ENCODE measurements at regions of chr1 and their contacts with region 1.

Region 1: DNA sequence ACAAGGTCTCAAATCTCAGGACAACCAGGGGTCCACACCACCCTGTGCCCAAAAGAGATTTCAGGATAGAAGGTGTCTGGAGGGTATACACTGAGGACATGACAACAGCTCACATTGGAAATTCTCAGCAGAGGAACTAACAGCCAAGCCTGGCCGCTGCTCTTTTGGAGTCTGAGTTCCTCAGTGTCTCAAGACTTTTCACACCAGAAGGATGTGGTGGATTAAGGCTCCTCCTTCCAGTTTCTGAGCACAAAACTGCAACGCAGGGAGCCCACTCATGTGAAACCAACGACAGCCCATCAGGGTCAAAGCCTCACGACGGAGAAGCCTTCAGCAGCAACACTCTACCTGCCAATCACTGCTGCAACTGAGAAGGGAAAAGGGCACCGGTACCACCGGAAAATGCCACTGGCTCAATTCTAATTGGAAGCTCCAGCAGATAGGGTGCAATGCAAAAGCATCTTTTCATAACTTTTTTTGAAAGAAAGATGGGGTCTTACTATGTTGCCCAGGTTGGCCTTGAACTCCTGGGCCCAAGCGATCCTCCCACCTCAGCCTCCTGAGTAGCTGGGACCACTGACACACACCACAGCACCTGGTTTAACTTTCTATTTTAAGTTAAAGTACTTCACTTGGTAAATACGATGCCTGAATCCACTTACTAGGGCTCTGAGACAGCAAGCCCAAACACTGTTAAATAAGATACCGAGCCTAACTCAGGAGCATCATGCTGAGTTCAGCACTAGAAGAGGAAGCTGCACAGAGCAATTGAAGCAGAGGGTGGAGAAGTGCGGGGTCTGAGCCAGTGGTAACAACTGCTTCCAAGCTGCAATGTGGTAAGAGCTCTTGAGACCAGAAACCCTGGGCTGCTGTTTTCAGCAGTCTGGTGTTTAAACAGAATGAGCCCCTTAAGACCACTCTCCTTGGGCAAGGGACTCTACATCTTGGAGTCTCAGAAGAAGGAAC is 7.8 kb downstream of the CAPZB start:
- DNase-seq: peak; percentile 68
- H3K4me3 Mint-ChIP-seq: peak overlapping the region; percentile 59
- H3K27ac Mint-ChIP-seq: peak overlapping the region; percentile 93
- H3K4me1 Mint-ChIP-seq: peaks cover 96% of the 10 kb centered on the region
- H3K27me3 Mint-ChIP-seq: no peaks in the 10 kb centered on the region

Region 2: GRCh38 chr1:19232526-19232851 is 245.1 kb before region 1 on chr1:
- CTCF ChIA-PET with region 1: no interaction called
- POLR2A ChIA-PET with region 1: no interaction called
- intact Hi-C with region 1: no loop called
- DNase-seq: no peak
- H3K4me3 Mint-ChIP-seq: no peak overlapping the region
- H3K27ac Mint-ChIP-seq: no peak overlapping the region
- H3K4me1 Mint-ChIP-seq: peaks cover 1% of the 10 kb centered on the region
- H3K27me3 Mint-ChIP-seq: no peaks in the 10 kb centered on the region

Region 3: DNA sequence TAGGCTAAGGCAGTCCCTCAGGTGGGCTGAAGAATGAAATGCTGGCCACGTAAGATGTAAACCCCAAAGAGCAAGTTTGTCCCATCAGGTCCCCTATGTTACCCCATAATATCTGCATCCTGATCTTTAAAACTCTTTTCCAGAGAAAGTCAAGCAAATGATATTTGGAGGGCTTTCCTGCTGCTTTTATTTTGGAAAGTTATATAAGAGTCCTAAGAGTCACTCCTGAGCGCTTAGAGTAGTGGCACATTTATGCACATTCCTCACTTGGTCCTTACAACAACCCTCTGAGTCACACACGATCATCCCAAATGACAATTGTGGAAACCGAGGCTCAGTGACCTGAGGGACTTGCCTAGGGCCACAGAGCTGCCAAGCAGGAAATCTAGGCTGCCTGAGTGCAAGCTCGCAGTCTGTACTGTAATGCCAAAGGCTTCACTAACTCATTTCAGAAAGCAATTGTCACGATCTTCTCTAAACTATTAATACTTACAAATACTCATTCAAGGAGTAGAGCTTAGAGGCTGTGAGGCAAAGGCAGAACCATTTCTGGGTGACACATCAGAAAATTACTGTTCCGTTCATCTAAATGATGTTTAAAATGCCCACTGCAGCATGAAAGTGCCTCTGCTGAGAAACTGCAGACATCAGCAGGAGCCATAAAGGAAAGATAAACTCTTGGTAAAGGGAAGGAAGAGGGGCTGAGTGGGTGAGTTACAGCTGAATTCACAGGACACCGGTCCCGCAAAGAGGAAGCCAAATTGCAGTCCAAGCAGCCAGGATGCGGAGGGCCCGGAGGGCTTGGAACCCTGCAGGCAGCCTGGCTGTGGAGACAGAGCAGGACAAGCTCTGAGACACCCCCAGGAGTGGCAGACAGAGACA is 23.1 kb before region 1 on chr1:
- CTCF ChIA-PET with region 1: no interaction called
- POLR2A ChIA-PET with region 1: interaction called, 4 read pairs
- intact Hi-C with region 1: loop called (anchors 1 kb)
- DNase-seq: no peak
- H3K4me3 Mint-ChIP-seq: no peak overlapping the region
- H3K27ac Mint-ChIP-seq: peak overlapping the region; percentile 83
- H3K4me1 Mint-ChIP-seq: peaks cover 86% of the 10 kb centered on the region
- H3K27me3 Mint-ChIP-seq: no peaks in the 10 kb centered on the region

Region 4: GRCh38 chr1:19460535-19461219 is 16.9 kb before region 1 on chr1:
- CTCF ChIA-PET with region 1: interaction called, 12 read pairs
- POLR2A ChIA-PET with region 1: interaction called, 3 read pairs
- intact Hi-C with region 1: loop called (anchors 1 kb)
- DNase-seq: peak; percentile 59
- H3K4me3 Mint-ChIP-seq: no peak overlapping the region
- H3K27ac Mint-ChIP-seq: peak overlapping the region; percentile 78
- H3K4me1 Mint-ChIP-seq: peaks cover 90% of the 10 kb centered on the region
- H3K27me3 Mint-ChIP-seq: no peaks in the 10 kb centered on the region